ENCODE measurements at regions of chr13 and their contacts with region 1.

Region 1: DNA sequence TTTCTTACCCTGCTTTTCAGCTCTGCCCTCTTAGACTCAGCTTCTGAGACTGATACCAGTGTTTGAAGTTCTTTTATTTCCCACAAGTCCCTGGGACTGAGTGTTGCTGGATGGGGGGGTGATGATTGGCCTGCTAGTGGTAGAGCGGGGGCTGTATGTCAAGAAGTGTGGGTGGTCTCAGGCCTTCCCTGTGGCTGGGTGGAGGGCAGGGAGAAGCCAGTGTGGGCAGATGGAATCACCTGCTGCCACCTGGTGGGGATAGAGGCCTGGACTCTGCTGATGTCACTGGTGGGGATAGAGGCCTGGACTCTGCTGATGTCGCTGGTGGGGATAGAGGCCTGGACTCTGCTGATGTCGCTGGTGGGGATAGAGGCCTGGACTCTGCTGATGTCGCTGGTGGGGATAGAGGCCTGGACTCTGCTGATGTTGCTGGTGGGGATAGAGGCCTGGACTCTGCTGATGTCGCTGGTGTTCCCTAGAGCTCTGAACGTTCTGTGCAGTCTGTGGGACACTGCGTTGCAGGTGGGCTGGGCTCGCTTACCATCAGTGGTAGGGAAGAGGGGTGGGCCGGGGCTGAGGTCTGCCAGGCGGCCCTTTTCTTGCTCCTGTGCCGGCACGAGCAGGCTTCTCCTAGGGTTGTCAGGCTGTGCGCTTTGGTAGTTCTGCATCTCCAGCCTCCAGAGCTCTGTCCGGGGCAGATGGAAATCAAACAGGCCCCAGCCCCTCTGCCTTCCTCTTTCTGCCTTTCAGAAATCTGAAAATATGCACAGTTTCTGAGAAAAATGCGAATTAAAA is 101.3 kb downstream of the ARHGEF7 start:
- DNase-seq: no peak

Region 2: DNA sequence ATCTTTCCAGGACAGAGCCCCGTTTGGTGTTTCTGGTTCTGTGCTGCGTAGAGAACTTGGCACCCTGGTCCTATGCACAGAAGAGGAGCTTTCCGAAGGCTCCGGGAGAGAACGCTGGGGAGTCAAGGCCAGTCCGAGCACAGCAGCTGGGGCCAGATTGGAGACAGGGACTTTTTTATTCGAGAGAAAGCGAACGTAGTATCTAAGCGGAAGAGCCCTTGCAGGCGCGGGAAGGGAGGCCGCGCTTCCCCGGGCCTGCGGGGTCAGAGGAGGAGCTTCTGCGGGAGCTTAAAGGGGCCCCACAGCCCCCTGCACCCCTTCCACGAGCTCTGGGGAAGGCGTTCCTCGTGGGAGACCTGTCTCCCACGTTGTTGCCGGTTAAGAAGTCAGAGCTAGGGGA is 149.8 kb before region 1 on chr13:
- intact Hi-C with region 1: loop called (anchors 5 kb)
- DNase-seq: no peak

Region 3: GRCh38 chr13:111153279-111153976 is 62.9 kb before region 1 on chr13:
- intact Hi-C with region 1: loop called (anchors 5 kb)
- DNase-seq: peak; percentile 96